Activated CD4-positive, alpha-beta memory T cell treated with anti-CD3 and anti-CD28 coated beads for 36 hours (primary cell): ENCODE measurements at regions of chr15 and their contacts with region 1.

Region 1: GRCh38 chr15:75367913-75368688 is at the start of gene MAN2C1:
- DNase-seq: peak; percentile 96
- H3K4me3 Mint-ChIP-seq: peak within 1 kb of the TSS; percentile 90
- H3K27ac Mint-ChIP-seq: peak within 1 kb of the TSS; percentile 93
- H3K4me1 Mint-ChIP-seq: peaks cover 23% of the 10 kb centered on the region
- H3K27me3 Mint-ChIP-seq: no peaks in the 10 kb centered on the region
- total RNA-seq, gene MAN2C1: 177 to 192 TPM

Region 2: GRCh38 chr15:75307778-75308391 is 60.2 kb before region 1 on chr15:
- CTCF ChIA-PET with region 1: no interaction called
- POLR2A ChIA-PET with region 1: no interaction called
- intact Hi-C with region 1: no loop called
- DNase-seq: peak; percentile 27
- H3K4me3 Mint-ChIP-seq: no peak overlapping the region
- H3K27ac Mint-ChIP-seq: no peak overlapping the region
- H3K4me1 Mint-ChIP-seq: no peaks in the 10 kb centered on the region
- H3K27me3 Mint-ChIP-seq: peaks cover 24% of the 10 kb centered on the region

Region 3: DNA sequence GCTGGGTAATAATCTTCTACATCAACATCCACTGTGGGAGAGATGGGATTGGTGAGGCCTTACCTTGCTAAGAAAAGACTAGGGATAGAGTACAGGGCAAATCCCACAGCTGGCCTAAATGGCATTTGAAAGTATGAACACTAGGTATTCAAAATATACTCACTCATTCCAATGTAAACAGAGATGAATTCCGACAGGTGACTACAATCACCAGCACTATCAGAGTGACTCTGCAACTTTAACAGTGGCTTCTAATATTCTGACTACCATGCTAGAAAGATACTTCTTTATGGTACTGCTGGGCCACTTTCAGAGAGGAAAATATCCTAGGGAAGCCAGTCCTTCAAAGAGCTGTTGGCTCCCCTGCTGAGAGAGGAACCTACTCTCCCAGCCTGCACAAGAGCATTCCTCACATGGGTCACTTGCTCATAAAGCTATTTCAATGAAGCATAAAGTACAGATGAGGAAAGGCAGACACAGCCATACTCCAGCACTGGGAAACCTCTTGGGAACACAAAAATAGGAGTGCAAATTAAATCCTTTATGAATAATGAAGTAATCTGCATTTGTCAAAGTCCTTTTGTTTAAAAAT is 21.8 kb after region 1 on chr15:
- CTCF ChIA-PET with region 1: interaction called, 11 read pairs
- POLR2A ChIA-PET with region 1: interaction called, 4 read pairs
- intact Hi-C with region 1: no loop called
- DNase-seq: no peak
- H3K4me3 Mint-ChIP-seq: no peak overlapping the region
- H3K27ac Mint-ChIP-seq: no peak overlapping the region
- H3K4me1 Mint-ChIP-seq: peaks cover 13% of the 10 kb centered on the region
- H3K27me3 Mint-ChIP-seq: no peaks in the 10 kb centered on the region

Region 4: GRCh38 chr15:75468913-75469598 is 101.0 kb after region 1 on chr15:
- CTCF ChIA-PET with region 1: interaction called, 10 read pairs
- POLR2A ChIA-PET with region 1: no interaction called
- intact Hi-C with region 1: no loop called
- DNase-seq: no peak
- H3K4me3 Mint-ChIP-seq: no peak overlapping the region
- H3K27ac Mint-ChIP-seq: no peak overlapping the region
- H3K4me1 Mint-ChIP-seq: no peaks in the 10 kb centered on the region
- H3K27me3 Mint-ChIP-seq: no peaks in the 10 kb centered on the region

Region 5: DNA sequence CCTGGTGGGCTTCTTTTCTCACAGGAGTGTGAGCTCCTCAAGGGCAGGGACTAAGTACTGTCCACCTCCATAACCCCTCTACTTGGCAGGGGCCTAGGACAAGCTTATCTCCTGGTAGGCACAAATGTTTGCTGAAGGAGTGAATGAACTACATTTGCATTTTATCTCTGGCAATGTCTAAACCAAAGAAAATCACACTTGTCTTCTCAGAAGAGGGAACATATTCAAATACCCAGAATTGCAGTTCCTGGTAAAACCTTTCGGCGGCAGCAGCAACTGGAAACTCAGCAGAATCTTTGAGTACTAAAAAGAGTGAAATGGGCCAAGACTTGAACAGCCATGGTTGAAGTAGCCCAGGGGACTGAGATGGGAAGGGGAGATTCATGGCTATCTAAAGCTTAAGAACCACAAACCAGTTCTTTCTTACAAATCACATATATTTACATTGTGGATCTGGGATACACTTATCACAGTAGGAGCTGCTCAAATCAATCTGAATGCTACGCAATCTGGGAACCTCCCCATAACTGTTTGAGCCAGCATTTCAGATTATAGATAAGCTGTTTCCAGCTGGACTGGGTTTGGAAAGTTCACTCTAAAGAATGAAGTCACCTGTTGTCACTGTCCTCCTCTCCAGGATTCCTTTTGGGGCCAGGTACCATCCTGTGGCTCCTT is 229.7 kb after region 1 on chr15:
- CTCF ChIA-PET with region 1: interaction called, 13 read pairs
- POLR2A ChIA-PET with region 1: no interaction called
- intact Hi-C with region 1: no loop called
- DNase-seq: peak; percentile 65
- H3K4me3 Mint-ChIP-seq: no peak overlapping the region
- H3K27ac Mint-ChIP-seq: peak overlapping the region; percentile 43
- H3K4me1 Mint-ChIP-seq: peaks cover 18% of the 10 kb centered on the region
- H3K27me3 Mint-ChIP-seq: no peaks in the 10 kb centered on the region

Region 6: DNA sequence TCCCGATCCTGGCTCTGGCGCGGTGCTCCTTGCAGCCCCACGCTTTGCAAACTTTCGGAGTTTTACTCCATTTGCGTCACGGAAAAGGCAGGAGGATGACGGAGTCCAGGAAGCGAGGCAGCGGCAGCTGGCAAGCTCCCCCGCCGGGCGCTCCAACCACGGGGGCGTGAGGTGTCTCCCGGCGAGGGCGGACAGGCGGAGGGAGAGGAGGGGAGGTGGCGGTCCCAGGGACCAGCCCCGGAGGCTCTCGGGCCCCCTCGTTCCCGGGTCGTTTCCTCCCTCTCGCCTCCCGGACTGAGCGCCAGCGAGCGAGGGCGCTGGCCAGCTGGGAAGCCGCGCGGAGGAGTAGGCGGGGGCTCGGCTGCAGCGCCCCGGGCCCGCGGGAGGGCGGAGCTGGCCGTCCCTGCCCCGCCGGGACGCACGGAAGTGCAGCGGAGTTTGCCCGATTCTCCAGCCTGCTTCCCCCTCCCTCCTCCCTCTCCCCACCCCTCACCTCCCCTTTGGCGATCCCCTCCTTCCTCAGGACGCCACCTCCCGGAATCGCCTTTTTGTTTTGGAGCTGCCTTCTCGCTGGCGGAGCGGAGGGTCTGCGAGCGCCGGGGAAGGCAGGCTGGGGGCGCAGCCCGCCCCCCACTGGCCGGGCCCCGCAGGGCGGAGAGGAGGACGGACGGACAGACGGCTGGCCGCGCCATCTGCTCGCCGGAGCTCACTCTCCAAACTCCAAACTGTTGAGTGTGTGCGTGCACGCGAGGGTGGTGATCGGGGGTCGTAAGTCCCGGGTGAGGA is 279.5 kb after region 1 on chr15 and contains the start of gene SNX33:
- CTCF ChIA-PET with region 1: interaction called, 69 read pairs
- POLR2A ChIA-PET with region 1: interaction called, 11 read pairs
- intact Hi-C with region 1: no loop called
- DNase-seq: peak; percentile 77
- H3K4me3 Mint-ChIP-seq: peak within 1 kb of the TSS; percentile 83
- H3K27ac Mint-ChIP-seq: peak within 1 kb of the TSS; percentile 65
- H3K4me1 Mint-ChIP-seq: peaks cover 44% of the 10 kb centered on the region
- H3K27me3 Mint-ChIP-seq: no peaks in the 10 kb centered on the region
- total RNA-seq, gene SNX33: 3.0 to 3.2 TPM

Region 7: GRCh38 chr15:75801859-75802593 is 433.9 kb after region 1 on chr15:
- CTCF ChIA-PET with region 1: interaction called, 11 read pairs
- POLR2A ChIA-PET with region 1: no interaction called
- intact Hi-C with region 1: no loop called
- DNase-seq: peak; percentile 88
- H3K4me3 Mint-ChIP-seq: peak overlapping the region; percentile 43
- H3K27ac Mint-ChIP-seq: no peak overlapping the region
- H3K4me1 Mint-ChIP-seq: peaks cover 4% of the 10 kb centered on the region
- H3K27me3 Mint-ChIP-seq: peaks cover 34% of the 10 kb centered on the region